ENCODE measurements at regions of chr12 and their contacts with region 1.

Region 1: GRCh38 chr12:113261847-113262470 is 40.7 kb downstream of the TPCN1 start:
- DNase-seq: peak; percentile 82
- H3K4me3 Mint-ChIP-seq: peak overlapping the region; percentile 60
- H3K27ac Mint-ChIP-seq: peak overlapping the region; percentile 62
- H3K4me1 Mint-ChIP-seq: peaks cover 37% of the 10 kb centered on the region
- H3K27me3 Mint-ChIP-seq: no peaks in the 10 kb centered on the region

Region 2: GRCh38 chr12:113092607-113093408 is 169.2 kb before region 1 on chr12:
- intact Hi-C with region 1: no loop called
- DNase-seq: no peak
- H3K4me3 Mint-ChIP-seq: no peak overlapping the region
- H3K27ac Mint-ChIP-seq: no peak overlapping the region
- H3K4me1 Mint-ChIP-seq: peaks cover 16% of the 10 kb centered on the region
- H3K27me3 Mint-ChIP-seq: no peaks in the 10 kb centered on the region

Region 3: GRCh38 chr12:113208041-113208934 is 53.7 kb before region 1 on chr12:
- intact Hi-C with region 1: loop called (anchors 2 kb)
- DNase-seq: peak; percentile 92
- H3K4me3 Mint-ChIP-seq: peak overlapping the region; percentile 77
- H3K27ac Mint-ChIP-seq: peak overlapping the region; percentile 97
- H3K4me1 Mint-ChIP-seq: peaks cover 54% of the 10 kb centered on the region
- H3K27me3 Mint-ChIP-seq: no peaks in the 10 kb centered on the region

Region 4: GRCh38 chr12:113232840-113233585 is 28.9 kb before region 1 on chr12:
- intact Hi-C with region 1: loop called (anchors 1 kb)
- DNase-seq: peak; percentile 87
- H3K4me3 Mint-ChIP-seq: peak overlapping the region; percentile 81
- H3K27ac Mint-ChIP-seq: peak overlapping the region; percentile 86
- H3K4me1 Mint-ChIP-seq: peaks cover 51% of the 10 kb centered on the region
- H3K27me3 Mint-ChIP-seq: no peaks in the 10 kb centered on the region

Region 5: DNA sequence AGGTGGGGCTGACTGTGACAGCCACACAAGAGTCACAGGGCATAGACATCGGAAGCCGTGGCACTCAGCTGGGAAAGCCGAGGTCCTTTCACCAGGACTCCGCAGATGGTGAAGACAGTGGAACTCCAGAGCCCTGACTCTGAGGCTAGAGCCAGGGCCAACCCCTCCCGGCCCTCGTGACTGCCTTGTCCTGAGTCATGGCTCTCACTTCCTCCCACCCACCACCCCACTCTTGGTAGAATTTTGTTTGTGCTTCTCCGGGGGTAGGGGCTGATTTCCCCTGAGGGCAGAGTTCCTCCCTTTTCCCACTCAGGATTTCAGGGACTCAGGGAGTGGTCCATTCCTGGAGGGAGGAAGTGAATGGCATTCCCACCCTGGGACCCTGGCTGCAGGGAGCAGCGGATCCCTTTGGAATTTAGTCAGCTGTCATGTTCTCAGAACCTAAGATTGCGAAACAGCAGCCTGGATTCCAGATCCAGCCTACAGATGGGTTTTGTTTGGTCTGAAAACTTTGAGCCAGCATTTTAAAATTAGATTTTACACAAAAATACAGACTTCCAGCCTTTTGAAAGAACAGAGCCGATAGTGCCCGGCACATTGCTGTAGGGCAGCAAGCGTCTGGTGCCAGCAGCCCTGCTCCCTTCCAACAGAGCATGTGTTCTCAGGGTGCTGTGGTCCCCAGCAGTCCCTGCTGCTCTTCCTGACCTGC is 10.0 kb after region 1 on chr12:
- intact Hi-C with region 1: loop called (anchors 1 kb)
- DNase-seq: no peak
- H3K4me3 Mint-ChIP-seq: no peak overlapping the region
- H3K27ac Mint-ChIP-seq: peak overlapping the region; percentile 53
- H3K4me1 Mint-ChIP-seq: peaks cover 16% of the 10 kb centered on the region
- H3K27me3 Mint-ChIP-seq: no peaks in the 10 kb centered on the region